Breast epithelium (tissue), 4 donors: ENCODE measurements at regions of chr17 and their contacts with region 1.

Region 1: GRCh38 chr17:63611354-63611753 is 10.7 kb downstream of the TACO1 start:
- DNase-seq: no peak
- H3K4me3 ChIP-seq: no peak overlapping the region
- H3K27ac ChIP-seq: no peak overlapping the region
- H3K4me1 ChIP-seq: no peaks in the 10 kb centered on the region
- H3K27me3 ChIP-seq: no peaks in the 10 kb centered on the region
- CTCF ChIP-seq: no peak
- POLR2A ChIP-seq: no peak

Region 2: DNA sequence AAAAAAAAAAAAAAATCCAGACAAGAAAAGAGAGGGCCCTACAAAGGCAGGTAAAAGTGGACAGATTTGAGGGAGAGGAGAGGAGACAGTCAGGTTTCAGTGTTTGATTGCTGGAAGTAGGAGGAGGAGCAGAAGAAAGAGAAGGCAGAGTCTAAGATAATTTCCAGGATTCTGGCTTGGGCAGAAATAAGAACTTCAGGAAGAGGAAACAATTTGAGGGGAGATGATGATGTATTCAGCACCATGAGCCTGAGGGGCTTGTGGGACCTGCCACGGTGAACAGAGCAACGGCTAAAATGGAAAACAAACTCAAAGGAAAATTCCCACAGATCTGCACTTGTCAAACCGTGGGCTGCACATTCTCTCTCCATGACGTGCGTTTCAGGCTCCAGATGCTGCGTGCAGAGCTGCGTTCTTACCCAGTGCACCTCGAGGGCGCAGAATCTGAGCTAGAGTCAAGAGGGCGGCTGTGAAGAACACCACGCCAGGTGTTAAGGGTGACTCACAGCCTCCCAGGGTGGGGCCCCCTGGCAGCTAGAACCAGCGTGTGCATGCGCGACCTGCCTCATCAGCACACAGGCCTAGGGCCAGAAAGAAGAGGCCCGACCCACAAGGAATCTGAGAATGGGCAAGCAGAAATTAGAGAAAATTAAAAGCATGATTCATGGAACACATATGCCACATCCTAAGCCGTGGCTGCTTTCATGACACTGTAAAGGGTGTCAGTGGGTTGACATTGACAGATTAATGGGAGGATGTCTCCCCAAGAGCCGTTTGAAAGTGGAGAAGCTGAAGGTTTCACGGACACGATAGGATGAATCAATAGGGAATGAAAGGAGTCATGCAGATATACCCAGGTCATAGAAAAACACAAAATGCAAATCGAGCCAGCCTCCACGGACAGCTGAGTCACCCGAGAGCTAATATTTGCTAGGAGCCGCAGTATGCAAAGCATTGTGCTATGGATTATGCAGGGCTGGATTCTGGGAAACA is 832.4 kb before region 1 on chr17:
- intact Hi-C with region 1: no loop called
- DNase-seq: peak; percentile 61 to 65
- H3K4me3 ChIP-seq: peak overlapping the region in 1 of 3 donors; percentile 40
- H3K27ac ChIP-seq: peak overlapping the region; percentile 56 to 64
- H3K4me1 ChIP-seq: no peaks in the 10 kb centered on the region
- H3K27me3 ChIP-seq: no peaks in the 10 kb centered on the region
- CTCF ChIP-seq: no peak
- POLR2A ChIP-seq: no peak

Region 3: DNA sequence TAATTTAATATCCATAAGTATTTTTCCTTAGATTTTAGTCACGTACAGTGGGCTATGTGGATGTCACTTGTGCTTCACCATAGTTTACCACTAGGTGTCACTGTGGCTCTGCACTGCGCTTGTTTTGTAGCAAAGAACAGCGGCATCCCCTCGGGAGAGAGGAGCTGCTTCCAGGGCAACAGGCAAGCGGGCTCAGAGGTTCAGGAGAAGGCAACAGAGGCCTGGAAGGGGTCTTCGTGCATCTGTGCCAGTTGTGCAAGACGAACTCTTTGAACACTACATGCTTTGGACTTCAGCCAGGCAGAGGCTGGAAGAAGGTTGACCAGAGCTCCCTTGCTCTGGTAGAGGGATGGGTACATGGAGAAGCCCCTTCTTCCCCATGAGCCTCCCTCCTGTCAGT is 185.9 kb before region 1 on chr17:
- intact Hi-C with region 1: loop called (anchors 10 kb)
- DNase-seq: peak in 1 of 2 donors; percentile 76
- H3K4me3 ChIP-seq: no peak overlapping the region
- H3K27ac ChIP-seq: no peak overlapping the region
- H3K4me1 ChIP-seq: no peaks in the 10 kb centered on the region
- H3K27me3 ChIP-seq: no peaks in the 10 kb centered on the region
- CTCF ChIP-seq: peak; percentile 84 to 96 (median 95)
- POLR2A ChIP-seq: no peak

Region 4: DNA sequence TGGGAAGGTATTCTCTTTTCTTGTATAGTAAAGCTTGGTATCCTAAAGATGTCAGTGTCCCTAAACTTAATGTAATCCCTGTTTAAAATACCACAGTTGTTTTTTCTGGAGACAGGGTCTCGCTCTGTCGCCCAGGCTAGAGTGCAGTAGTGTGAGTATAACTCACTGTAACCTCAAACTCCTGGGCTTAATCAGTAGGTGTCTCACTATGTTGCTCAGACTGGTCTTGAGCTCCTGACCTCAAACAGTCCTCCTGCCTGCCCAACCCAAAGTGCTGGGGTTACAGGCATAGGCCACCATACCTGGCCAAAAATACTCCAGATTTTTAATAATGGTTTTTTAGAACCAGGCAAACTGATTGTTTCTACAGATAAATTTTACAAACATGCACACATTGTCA is 52.9 kb before region 1 on chr17:
- intact Hi-C with region 1: no loop called
- DNase-seq: no peak
- H3K4me3 ChIP-seq: no peak overlapping the region
- H3K27ac ChIP-seq: no peak overlapping the region
- H3K4me1 ChIP-seq: no peaks in the 10 kb centered on the region
- H3K27me3 ChIP-seq: no peaks in the 10 kb centered on the region
- CTCF ChIP-seq: no peak
- POLR2A ChIP-seq: no peak

Region 5: GRCh38 chr17:63579540-63580001 is 31.8 kb before region 1 on chr17:
- intact Hi-C with region 1: loop called (anchors 1 kb)
- DNase-seq: no peak
- H3K4me3 ChIP-seq: no peak overlapping the region
- H3K27ac ChIP-seq: no peak overlapping the region
- H3K4me1 ChIP-seq: no peaks in the 10 kb centered on the region
- H3K27me3 ChIP-seq: no peaks in the 10 kb centered on the region
- CTCF ChIP-seq: no peak
- POLR2A ChIP-seq: no peak